Activated naive CD4-positive, alpha-beta T cell treated with anti-CD3 and anti-CD28 coated beads, Interleukin-2, amount 10 ng/mL, durations not matched to agents 7 days and 5 days (primary cell): ENCODE measurements at regions of chr7 and their contacts with region 1.

Region 1: GRCh38 chr7:47818796-47819606 is 129.3 kb downstream of the PKD1L1 start:
- DNase-seq: peak; percentile 66
- H3K4me3 Mint-ChIP-seq: no peak overlapping the region
- H3K27ac Mint-ChIP-seq: no peak overlapping the region
- H3K4me1 Mint-ChIP-seq: no peaks in the 10 kb centered on the region
- H3K27me3 Mint-ChIP-seq: no peaks in the 10 kb centered on the region

Region 2: GRCh38 chr7:47266131-47266706 is 552.8 kb before region 1 on chr7:
- CTCF ChIA-PET with region 1: interaction called, 14 read pairs
- DNase-seq: peak; percentile 45
- H3K4me3 Mint-ChIP-seq: no peak overlapping the region
- H3K27ac Mint-ChIP-seq: no peak overlapping the region
- H3K4me1 Mint-ChIP-seq: no peaks in the 10 kb centered on the region
- H3K27me3 Mint-ChIP-seq: no peaks in the 10 kb centered on the region